PC-9 (cell line): ENCODE measurements at regions of chr6 and their contacts with region 1.

Region 1: DNA sequence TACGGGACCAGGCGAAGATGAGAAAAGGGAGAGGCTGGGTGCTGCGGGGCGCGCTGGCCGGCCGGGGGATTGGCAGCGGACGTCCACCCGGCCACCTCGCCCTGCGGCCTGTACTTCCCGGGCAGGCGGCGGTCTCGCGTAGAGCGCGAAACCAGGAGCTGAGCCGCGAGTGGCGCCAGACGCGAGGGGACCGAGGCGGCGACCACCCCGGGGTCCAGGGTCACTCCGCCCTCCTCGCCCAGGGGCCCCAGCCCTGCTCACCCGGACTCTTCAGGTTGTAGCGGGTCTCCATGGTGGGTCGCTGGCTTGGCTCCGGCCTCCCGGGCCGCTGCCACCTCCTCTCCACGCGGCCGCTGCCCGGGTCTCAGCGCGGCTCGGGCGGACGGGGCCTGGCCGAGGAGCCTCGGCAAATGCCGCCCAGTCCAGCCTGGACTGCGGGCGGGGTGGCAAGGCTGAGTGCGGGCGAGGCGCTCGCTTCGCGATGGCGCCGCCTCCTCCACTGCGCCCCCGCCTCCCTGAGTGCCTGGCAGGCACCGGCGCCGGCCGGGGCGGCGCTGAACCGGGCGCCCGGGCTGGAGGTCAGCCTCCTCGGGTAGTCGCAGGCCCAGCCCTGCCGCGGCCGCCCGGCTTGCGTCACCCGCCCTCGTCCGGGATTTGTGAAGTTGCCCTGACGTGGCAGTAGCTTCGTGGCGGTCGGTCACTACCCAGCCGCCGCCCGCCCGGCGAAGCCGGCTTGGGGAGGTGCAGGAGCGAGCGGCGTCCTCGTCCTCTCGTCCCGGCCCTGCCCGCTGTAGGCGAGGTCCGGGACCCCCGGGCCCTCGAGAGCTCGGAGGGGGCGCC is at the start of gene UBE2J1:
- DNase-seq: peak; percentile 80 to 93
- H3K4me3 ChIP-seq: peak within 1 kb of the TSS; percentile 81
- H3K27ac ChIP-seq: peak within 1 kb of the TSS; percentile 88
- H3K4me1 ChIP-seq: peaks cover 28% of the 10 kb centered on the region
- H3K27me3 ChIP-seq: no peaks in the 10 kb centered on the region
- CTCF ChIP-seq: no peak
- total RNA-seq, gene UBE2J1: 19.8 and 29.0 TPM in 2 replicates

Region 2: GRCh38 chr6:89080542-89081422 is 271.7 kb before region 1 on chr6 and contains the start of gene PNRC1:
- CTCF ChIA-PET with region 1: interaction called, 3 read pairs
- POLR2A ChIA-PET with region 1: interaction called, 4 read pairs
- intact Hi-C with region 1: loop called (anchors 5 kb)
- DNase-seq: peak; percentile 91 to 98
- H3K4me3 ChIP-seq: peak within 1 kb of the TSS; percentile 98
- H3K27ac ChIP-seq: peak within 1 kb of the TSS; percentile 63
- H3K4me1 ChIP-seq: no peaks in the 10 kb centered on the region; the same call in 1 of the 2 replicates
- H3K27me3 ChIP-seq: no peaks in the 10 kb centered on the region
- CTCF ChIP-seq: no peak
- total RNA-seq, gene PNRC1: 58.3 and 66.9 TPM in 2 replicates

Region 3: GRCh38 chr6:89145787-89146646 is 206.5 kb before region 1 on chr6 and contains the start of gene PM20D2:
- CTCF ChIA-PET with region 1: no interaction called
- POLR2A ChIA-PET with region 1: interaction called, 25 read pairs
- intact Hi-C with region 1: no loop called
- DNase-seq: peak in 1 of 2 experiments; percentile 76
- H3K4me3 ChIP-seq: peak within 1 kb of the TSS; percentile 80
- H3K27ac ChIP-seq: peak within 1 kb of the TSS; percentile 85
- H3K4me1 ChIP-seq: peaks cover 32% of the 10 kb centered on the region; the same call in 1 of the 2 replicates
- H3K27me3 ChIP-seq: no peaks in the 10 kb centered on the region
- CTCF ChIP-seq: no peak
- total RNA-seq, gene PM20D2: 21.9 and 28.8 TPM in 2 replicates

Region 4: GRCh38 chr6:89221971-89222711 is 130.4 kb before region 1 on chr6:
- CTCF ChIA-PET with region 1: no interaction called
- POLR2A ChIA-PET with region 1: no interaction called
- intact Hi-C with region 1: no loop called
- DNase-seq: no peak
- H3K4me3 ChIP-seq: no peak overlapping the region
- H3K27ac ChIP-seq: no peak overlapping the region
- H3K4me1 ChIP-seq: no peaks in the 10 kb centered on the region
- H3K27me3 ChIP-seq: no peaks in the 10 kb centered on the region
- CTCF ChIP-seq: no peak

Region 5: DNA sequence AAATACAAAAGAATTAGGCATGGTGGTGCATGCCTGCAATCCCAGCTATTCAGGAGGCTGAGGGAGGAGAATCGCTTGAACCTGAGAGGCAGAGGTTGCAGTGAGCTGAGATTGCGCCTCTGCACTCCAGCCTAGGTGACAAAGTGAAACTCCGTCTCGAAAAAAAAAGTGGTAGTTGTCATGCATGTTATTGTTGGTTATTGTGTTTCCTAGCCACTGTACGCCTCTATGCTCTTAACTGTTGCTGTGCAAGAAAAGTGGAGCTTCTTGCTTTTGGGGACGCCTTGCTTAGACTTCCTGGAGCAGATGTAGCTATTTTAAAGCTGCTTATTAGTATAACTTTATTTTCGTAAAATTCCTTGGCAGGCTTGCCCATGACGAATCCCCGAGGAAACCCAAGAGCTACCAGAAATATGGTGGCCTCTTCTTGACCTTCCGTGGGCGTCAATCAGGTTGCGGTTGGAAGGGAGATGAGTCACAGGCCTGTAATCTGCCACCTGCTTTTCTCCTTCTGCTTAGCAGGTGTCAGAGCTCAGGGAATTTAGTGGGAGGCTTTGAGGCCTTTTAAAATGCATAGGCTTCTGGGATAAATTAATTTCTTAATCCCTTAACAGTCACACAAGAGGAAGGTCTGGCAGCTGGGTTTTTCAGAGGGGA is 54.7 kb before region 1 on chr6:
- CTCF ChIA-PET with region 1: interaction called, 6 read pairs
- POLR2A ChIA-PET with region 1: interaction called, 27 read pairs
- intact Hi-C with region 1: loop called (anchors 1 kb)
- DNase-seq: peak; percentile 87 to 96
- H3K4me3 ChIP-seq: peak overlapping the region; percentile 37; the same call in 1 of the 2 replicates
- H3K27ac ChIP-seq: peak overlapping the region; percentile 100
- H3K4me1 ChIP-seq: peaks cover 36% of the 10 kb centered on the region
- H3K27me3 ChIP-seq: no peaks in the 10 kb centered on the region
- CTCF ChIP-seq: no peak

Region 6: GRCh38 chr6:89479897-89480296 is 127.4 kb after region 1 on chr6:
- CTCF ChIA-PET with region 1: interaction called, 12 read pairs
- POLR2A ChIA-PET with region 1: no interaction called
- intact Hi-C with region 1: no loop called
- DNase-seq: no peak
- H3K4me3 ChIP-seq: no peak overlapping the region
- H3K27ac ChIP-seq: no peak overlapping the region
- H3K4me1 ChIP-seq: no peaks in the 10 kb centered on the region
- H3K27me3 ChIP-seq: no peaks in the 10 kb centered on the region
- CTCF ChIP-seq: no peak

Region 7: DNA sequence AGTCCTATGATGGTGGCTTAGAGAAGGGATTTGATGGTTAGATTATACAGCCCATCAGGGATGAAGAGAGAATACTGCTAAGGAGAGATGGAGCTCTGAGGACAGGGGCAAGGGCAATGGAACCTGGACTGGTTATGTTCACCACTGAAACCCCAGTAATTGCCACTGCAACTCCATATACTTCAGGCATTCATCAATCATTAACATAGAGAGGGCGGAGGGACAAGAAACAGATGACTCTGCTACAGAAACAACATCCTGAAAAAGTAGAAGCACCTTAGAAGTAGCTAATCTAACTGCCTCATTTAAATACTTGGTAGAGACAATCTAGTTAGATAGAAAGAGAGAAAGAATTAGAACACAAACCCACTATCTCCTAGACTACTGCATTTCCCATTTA is 377.3 kb after region 1 on chr6:
- CTCF ChIA-PET with region 1: no interaction called
- POLR2A ChIA-PET with region 1: no interaction called
- intact Hi-C with region 1: no loop called
- DNase-seq: no peak
- H3K4me3 ChIP-seq: no peak overlapping the region
- H3K27ac ChIP-seq: no peak overlapping the region
- H3K4me1 ChIP-seq: no peaks in the 10 kb centered on the region
- H3K27me3 ChIP-seq: no peaks in the 10 kb centered on the region
- CTCF ChIP-seq: no peak